CD4-positive, alpha-beta T cell (primary cell): ENCODE measurements at regions of chr22 and their contacts with region 1.

Region 1: DNA sequence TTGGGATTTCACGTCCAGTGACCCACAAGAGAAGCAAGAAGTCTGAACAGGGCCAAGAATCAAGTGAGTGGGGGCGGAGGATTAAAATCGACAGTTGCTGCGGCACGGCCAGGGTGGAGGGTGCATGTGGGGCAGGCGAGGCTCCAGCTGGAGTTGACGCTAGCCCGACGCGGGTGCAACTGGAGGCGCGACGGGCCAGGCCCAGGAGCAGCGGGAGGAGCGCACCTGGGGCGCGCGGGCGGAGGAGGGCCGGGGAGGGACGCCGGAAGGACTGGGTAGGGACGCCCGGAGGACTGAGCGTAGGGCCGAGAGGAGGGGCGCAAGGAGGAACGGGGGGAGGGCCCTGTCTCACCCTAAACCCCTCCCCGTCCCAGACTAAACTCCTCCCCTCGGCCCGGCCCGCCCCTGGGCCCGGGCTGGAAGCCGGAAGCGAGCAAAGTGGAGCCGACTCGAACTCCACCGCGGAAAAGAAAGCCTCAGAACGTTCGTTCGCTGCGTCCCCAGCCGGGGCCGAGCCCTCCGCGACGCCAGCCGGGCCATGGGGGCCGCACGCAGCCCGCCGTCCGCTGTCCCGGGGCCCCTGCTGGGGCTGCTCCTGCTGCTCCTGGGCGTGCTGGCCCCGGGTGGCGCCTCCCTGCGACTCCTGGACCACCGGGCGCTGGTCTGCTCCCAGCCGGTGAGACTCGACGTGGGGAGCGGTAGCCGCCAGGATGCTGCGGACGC is at the start of gene IL17RA:
- DNase-seq: peak; percentile 87 to 98 (median 95)
- ATAC-seq: peak; percentile 86
- H3K4me3 ChIP-seq: peak within 1 kb of the TSS; percentile 82
- H3K4me3 Mint-ChIP-seq: peak within 1 kb of the TSS; percentile 97
- H3K27ac ChIP-seq: peak within 1 kb of the TSS; percentile 68 to 93
- H3K27ac Mint-ChIP-seq: peak within 1 kb of the TSS; percentile 88
- H3K4me1 ChIP-seq: peaks cover 49% of the 10 kb centered on the region
- H3K4me1 Mint-ChIP-seq: peaks cover 48% of the 10 kb centered on the region
- H3K27me3 ChIP-seq: no peaks in the 10 kb centered on the region
- H3K27me3 Mint-ChIP-seq: no peaks in the 10 kb centered on the region
- CTCF ChIP-seq: no peak
- total RNA-seq, gene IL17RA: 23.2 to 24.3 TPM

Region 2: GRCh38 chr22:17098379-17098819 is 13.7 kb after region 1 on chr22:
- CTCF ChIA-PET with region 1: interaction called, 4 read pairs
- POLR2A ChIA-PET with region 1: interaction called, 49 read pairs
- intact Hi-C with region 1: loop called in 1 of 2 experiments (anchors 1 kb)
- DNase-seq: peak in 6 of 14 experiments; percentile 20 to 75 (median 62)
- ATAC-seq: peak; percentile 89
- H3K4me3 ChIP-seq: peak overlapping the region; percentile 3
- H3K4me3 Mint-ChIP-seq: peak overlapping the region; percentile 71
- H3K27ac ChIP-seq: peak overlapping the region; percentile 4 to 5
- H3K27ac Mint-ChIP-seq: peak overlapping the region; percentile 77
- H3K4me1 ChIP-seq: peaks cover 86% of the 10 kb centered on the region
- H3K4me1 Mint-ChIP-seq: peaks cover 93% of the 10 kb centered on the region
- H3K27me3 ChIP-seq: no peaks in the 10 kb centered on the region
- H3K27me3 Mint-ChIP-seq: no peaks in the 10 kb centered on the region
- CTCF ChIP-seq: no peak

Region 3: GRCh38 chr22:17106785-17107546 is 22.3 kb after region 1 on chr22:
- CTCF ChIA-PET with region 1: interaction called, 3 read pairs
- POLR2A ChIA-PET with region 1: interaction called, 30 read pairs
- intact Hi-C with region 1: no loop called
- DNase-seq: peak in 5 of 14 experiments; percentile 26 to 56 (median 46)
- ATAC-seq: peak; percentile 74
- H3K4me3 ChIP-seq: peak overlapping the region; percentile 11
- H3K4me3 Mint-ChIP-seq: peak overlapping the region; percentile 82
- H3K27ac ChIP-seq: peak overlapping the region; percentile 36 to 66
- H3K27ac Mint-ChIP-seq: peak overlapping the region; percentile 90
- H3K4me1 ChIP-seq: peaks cover 48% of the 10 kb centered on the region
- H3K4me1 Mint-ChIP-seq: peaks cover 65% of the 10 kb centered on the region
- H3K27me3 ChIP-seq: no peaks in the 10 kb centered on the region
- H3K27me3 Mint-ChIP-seq: no peaks in the 10 kb centered on the region
- CTCF ChIP-seq: no peak

Region 4: GRCh38 chr22:17119481-17120202 is 34.9 kb after region 1 on chr22:
- CTCF ChIA-PET with region 1: interaction called, 3 read pairs
- POLR2A ChIA-PET with region 1: interaction called, 42 read pairs
- intact Hi-C with region 1: loop called (anchors 2 kb)
- DNase-seq: peak in 2 of 14 experiments; percentile 45 to 50
- ATAC-seq: no peak
- H3K4me3 ChIP-seq: no peak overlapping the region
- H3K4me3 Mint-ChIP-seq: peak overlapping the region; percentile 72
- H3K27ac ChIP-seq: no peak overlapping the region
- H3K27ac Mint-ChIP-seq: no peak overlapping the region
- H3K4me1 ChIP-seq: peaks cover 65% of the 10 kb centered on the region
- H3K4me1 Mint-ChIP-seq: peaks cover 53% of the 10 kb centered on the region
- H3K27me3 ChIP-seq: peaks cover 17 to 19% of the 10 kb centered on the region in 2 experiments
- H3K27me3 Mint-ChIP-seq: peaks cover 17% of the 10 kb centered on the region
- CTCF ChIP-seq: no peak

Region 5: GRCh38 chr22:17158568-17159503 is 74.1 kb after region 1 on chr22 and contains the start of gene HDHD5:
- CTCF ChIA-PET with region 1: interaction called, 3 read pairs
- POLR2A ChIA-PET with region 1: interaction called, 5 read pairs
- intact Hi-C with region 1: loop called (anchors 1 to 2 kb)
- DNase-seq: peak; percentile 82 to 96 (median 88)
- ATAC-seq: peak; percentile 92
- H3K4me3 ChIP-seq: peak within 1 kb of the TSS; percentile 85
- H3K4me3 Mint-ChIP-seq: peak within 1 kb of the TSS; percentile 82
- H3K27ac ChIP-seq: peak within 1 kb of the TSS; percentile 41 to 65
- H3K27ac Mint-ChIP-seq: peak within 1 kb of the TSS; percentile 58
- H3K4me1 ChIP-seq: peaks cover 39% of the 10 kb centered on the region
- H3K4me1 Mint-ChIP-seq: peaks cover 37% of the 10 kb centered on the region
- H3K27me3 ChIP-seq: no peaks in the 10 kb centered on the region
- H3K27me3 Mint-ChIP-seq: no peaks in the 10 kb centered on the region
- CTCF ChIP-seq: no peak
- total RNA-seq, gene HDHD5: 11.0 to 11.6 TPM

Region 6: GRCh38 chr22:17638432-17639246 is 553.9 kb after region 1 on chr22 and contains the start of gene BCL2L13:
- CTCF ChIA-PET with region 1: no interaction called
- POLR2A ChIA-PET with region 1: no interaction called
- intact Hi-C with region 1: loop called (anchors 5 to 10 kb)
- DNase-seq: peak; percentile 77 to 94 (median 84)
- ATAC-seq: peak; percentile 90
- H3K4me3 ChIP-seq: peak within 1 kb of the TSS; percentile 85
- H3K4me3 Mint-ChIP-seq: peak within 1 kb of the TSS; percentile 92
- H3K27ac ChIP-seq: peak within 1 kb of the TSS; percentile 98 to 99
- H3K27ac Mint-ChIP-seq: peak within 1 kb of the TSS; percentile 96
- H3K4me1 ChIP-seq: peaks cover 24% of the 10 kb centered on the region
- H3K4me1 Mint-ChIP-seq: peaks cover 31% of the 10 kb centered on the region
- H3K27me3 ChIP-seq: no peaks in the 10 kb centered on the region
- H3K27me3 Mint-ChIP-seq: no peaks in the 10 kb centered on the region
- CTCF ChIP-seq: no peak
- total RNA-seq, gene BCL2L13: 8.1 to 10.0 TPM